GM13976 (cell line): ENCODE measurements at regions of chr13 and their contacts with region 1.

Region 1: GRCh38 chr13:31431722-31432137 is 232.0 kb downstream of the B3GLCT start:
- DNase-seq: peak; percentile 23
- CTCF ChIP-seq: peak; percentile 64

Region 2: DNA sequence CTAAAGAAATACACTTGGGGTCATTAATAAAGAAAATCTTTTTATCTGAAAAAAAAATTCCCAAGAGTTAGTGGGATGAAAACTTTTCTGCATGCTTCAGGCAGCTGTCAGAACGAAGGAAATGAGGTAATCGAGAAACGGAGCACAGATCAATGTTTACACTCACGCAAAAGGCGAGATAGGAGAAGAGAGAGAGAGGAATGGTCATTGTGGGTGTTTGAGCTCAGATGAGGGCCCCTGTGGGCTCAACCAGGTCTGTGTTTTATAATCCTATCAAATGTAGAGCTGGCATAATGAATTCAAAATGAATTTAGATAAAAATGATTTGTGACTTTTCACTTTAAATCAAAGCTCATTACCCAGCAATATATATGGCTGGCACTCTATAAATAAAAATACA is 301.3 kb after region 1 on chr13:
- in situ Hi-C with region 1: loop called (anchors 10 kb)
- DNase-seq: no peak
- CTCF ChIP-seq: no peak